Tibial artery (tissue), 4 donors: ENCODE measurements at regions of chr6 and their contacts with region 1.

Region 1: DNA sequence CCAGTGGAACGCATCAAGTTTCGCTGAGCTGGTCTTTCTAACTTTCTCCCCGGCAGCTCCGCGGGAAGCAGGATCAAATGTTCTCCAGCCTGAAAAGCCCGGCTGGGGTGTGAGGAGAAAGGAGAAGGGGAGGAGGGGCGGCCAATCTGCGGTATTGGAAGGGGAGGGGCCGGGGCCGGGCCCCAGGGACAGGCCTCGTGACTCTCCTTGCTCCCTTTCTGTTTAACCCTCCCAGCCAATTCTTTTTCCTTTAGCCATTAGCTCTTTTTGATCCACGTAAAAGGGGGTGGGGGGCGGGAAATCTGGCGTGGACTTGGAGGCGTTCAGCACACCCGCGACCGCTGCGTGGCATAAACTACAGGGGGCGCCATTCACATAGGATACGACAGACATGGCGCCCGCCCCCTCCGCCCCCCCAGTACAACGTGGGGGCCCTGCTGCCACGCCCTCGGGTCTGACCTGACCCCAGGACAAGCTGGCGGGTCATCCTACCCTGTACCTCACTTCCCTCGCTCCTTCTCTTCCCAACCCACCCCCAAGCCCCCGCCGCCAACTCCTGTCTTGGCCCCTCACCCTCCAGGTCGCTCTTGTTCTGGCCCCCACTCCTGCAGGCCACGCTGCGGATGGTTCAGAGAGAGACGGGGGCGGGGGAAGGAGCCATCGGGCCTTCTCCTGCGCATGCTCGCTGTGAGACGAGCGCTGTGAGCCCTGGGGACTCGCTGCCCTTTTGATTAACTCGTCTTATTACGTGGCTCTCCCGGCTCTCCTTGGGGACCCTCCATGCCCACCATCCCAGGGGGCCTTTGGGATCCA is 7.8 kb upstream of the MDGA1 start:
- DNase-seq: peak; percentile 78 to 88
- H3K4me3 ChIP-seq: peak overlapping the region; percentile 52 to 58
- H3K27ac ChIP-seq: peak overlapping the region; percentile 81 to 85
- H3K4me1 ChIP-seq: peaks cover 0 to 16% (median 9%) of the 10 kb centered on the region in 4 donors
- H3K27me3 ChIP-seq: no peaks in the 10 kb centered on the region
- CTCF ChIP-seq: peak; percentile 69 to 71

Region 2: DNA sequence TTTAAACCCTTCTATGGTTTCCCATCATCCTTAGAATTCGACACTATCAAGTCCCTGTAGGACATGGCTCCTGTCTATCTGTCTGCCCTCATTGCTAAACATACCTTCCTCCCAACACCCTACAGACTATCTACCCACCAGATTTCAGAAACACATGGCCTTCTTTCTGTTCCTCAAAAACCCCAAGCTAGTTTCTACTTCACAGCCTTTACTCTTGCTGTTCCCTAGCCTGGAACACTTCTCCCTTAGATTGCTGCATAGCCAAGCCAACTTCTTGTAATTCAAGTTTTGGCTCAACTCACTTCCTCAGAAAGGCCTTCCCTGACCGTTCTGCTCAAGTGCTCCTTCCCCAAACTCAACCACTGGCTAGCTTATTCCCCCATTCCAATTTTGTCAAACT is 778.1 kb after region 1 on chr6:
- intact Hi-C with region 1: loop called (anchors 10 kb)
- DNase-seq: no peak
- H3K4me3 ChIP-seq: no peak overlapping the region
- H3K27ac ChIP-seq: no peak overlapping the region
- H3K4me1 ChIP-seq: peaks cover 0 to 5% (median 0%) of the 10 kb centered on the region in 4 donors
- H3K27me3 ChIP-seq: no peaks in the 10 kb centered on the region
- CTCF ChIP-seq: no peak